ENCODE measurements at regions of chr6 and their contacts with region 1.

Region 1: DNA sequence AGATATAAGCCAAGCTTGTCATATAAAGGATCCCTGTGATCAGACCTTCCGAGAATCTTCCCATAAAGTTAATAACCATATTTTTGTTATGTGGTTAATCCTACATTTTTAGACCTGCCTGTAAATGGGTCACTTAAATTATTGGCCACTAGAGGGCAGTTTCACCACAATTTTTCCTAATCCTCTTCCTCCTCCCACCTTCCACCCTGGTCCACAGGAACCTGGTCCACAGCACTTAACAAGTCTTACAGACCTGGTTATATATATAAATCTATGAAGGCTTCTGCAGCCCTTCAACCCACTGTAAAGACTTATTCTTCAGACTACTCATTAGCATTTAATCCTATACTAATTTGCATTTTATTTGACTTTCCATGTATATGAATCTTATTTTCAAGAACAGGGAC is 28.3 kb downstream of the MRS2 start:
- DNase-seq: peak in 1 of 2 experiments; percentile 9
- H3K4me3 ChIP-seq: no peak overlapping the region
- H3K27ac ChIP-seq: no peak overlapping the region
- H3K4me1 ChIP-seq: no peaks in the 10 kb centered on the region
- H3K27me3 ChIP-seq: no peaks in the 10 kb centered on the region
- CTCF ChIP-seq: peak; percentile 3 to 67 (median 51)
- EP300 ChIP-seq: no peak
- POLR2A ChIP-seq: no peak
- RAD21 ChIP-seq: peak; percentile 69 to 72

Region 2: GRCh38 chr6:24402697-24403501 is 28.1 kb before region 1 on chr6 and contains the start of gene MRS2:
- CTCF ChIA-PET with region 1: interaction called, 3 read pairs
- POLR2A ChIA-PET with region 1: interaction called, 16 read pairs
- DNase-seq: peak; percentile 78 to 90
- H3K4me3 ChIP-seq: peak within 1 kb of the TSS; percentile 73 to 94 (median 86)
- H3K27ac ChIP-seq: peak within 1 kb of the TSS; percentile 80
- H3K4me1 ChIP-seq: peaks cover 5 to 21% (median 12%) of the 10 kb centered on the region in 4 experiments
- H3K27me3 ChIP-seq: no peaks in the 10 kb centered on the region
- CTCF ChIP-seq: no peak
- EP300 ChIP-seq: no peak
- POLR2A ChIP-seq: peak; percentile 66 to 90
- RAD21 ChIP-seq: no peak
- total RNA-seq, gene MRS2: 67.5 and 68.4 TPM in 2 replicates

Region 3: DNA sequence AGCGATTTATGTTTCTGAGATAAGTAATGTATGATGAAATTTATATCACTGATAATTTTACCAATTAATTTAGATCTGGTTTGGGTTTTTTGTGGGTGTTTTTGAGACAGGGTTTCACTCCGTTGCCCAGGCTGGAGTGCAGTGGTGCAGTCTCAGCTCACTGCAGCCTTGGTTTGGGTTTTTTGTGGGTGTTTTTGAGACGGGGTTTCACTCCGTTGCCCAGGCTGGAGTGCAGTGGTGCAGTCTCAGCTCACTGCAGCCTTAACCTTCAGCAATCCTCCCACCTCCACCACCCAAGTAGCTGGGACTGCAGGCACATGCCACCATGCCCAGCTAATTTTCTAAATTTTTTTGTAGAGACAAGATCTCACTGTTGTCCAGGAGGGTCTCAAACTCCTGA is 15.3 kb before region 1 on chr6:
- CTCF ChIA-PET with region 1: interaction called, 14 read pairs
- POLR2A ChIA-PET with region 1: interaction called, 33 read pairs
- DNase-seq: no peak
- H3K4me3 ChIP-seq: no peak overlapping the region
- H3K27ac ChIP-seq: no peak overlapping the region
- H3K4me1 ChIP-seq: no peaks in the 10 kb centered on the region
- H3K27me3 ChIP-seq: no peaks in the 10 kb centered on the region
- CTCF ChIP-seq: no peak
- EP300 ChIP-seq: no peak
- POLR2A ChIP-seq: no peak
- RAD21 ChIP-seq: no peak

Region 4: DNA sequence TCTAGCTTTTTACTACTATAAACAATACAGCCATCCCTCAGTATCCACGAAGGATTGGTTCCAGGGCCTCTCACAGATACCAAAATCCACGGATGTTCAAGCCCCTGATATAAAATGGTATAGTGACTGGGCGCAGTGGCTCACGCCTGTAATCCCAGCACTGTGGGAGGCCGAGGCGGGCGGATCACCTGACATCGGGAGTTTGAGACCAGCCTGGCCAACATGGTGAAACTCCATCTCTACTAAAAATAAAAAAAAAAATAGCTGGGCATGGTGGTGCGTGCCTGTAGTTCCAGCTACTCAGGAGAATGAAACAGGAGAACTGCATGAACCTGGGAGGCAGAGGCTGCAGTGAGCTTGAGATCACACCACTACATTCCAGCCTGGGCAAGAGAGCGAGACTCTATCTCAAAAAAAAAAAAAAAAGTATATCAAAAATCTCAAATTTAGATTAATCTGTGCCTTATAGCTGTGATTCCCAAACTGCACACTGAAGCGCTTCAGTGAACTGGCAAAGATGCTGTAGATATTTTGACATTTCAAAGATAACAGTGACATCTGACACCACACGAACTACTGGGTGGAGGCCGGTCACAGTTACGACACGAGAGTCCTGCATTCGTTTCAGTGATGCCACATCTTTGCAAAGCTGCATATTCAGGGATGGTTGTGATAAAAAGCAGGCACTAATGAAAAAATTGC is 10.0 kb after region 1 on chr6:
- CTCF ChIA-PET with region 1: interaction called, 12 read pairs
- POLR2A ChIA-PET with region 1: interaction called, 3 read pairs
- DNase-seq: no peak
- H3K4me3 ChIP-seq: no peak overlapping the region
- H3K27ac ChIP-seq: no peak overlapping the region
- H3K4me1 ChIP-seq: peaks cover 0 to 4% (median 2%) of the 10 kb centered on the region in 4 experiments; a peak in 2 of 7 replicates
- H3K27me3 ChIP-seq: no peaks in the 10 kb centered on the region
- CTCF ChIP-seq: no peak
- EP300 ChIP-seq: no peak
- POLR2A ChIP-seq: no peak
- RAD21 ChIP-seq: no peak

Region 5: GRCh38 chr6:24494821-24495795 is 64.1 kb after region 1 on chr6 and contains the start of gene ALDH5A1:
- CTCF ChIA-PET with region 1: interaction called, 26 read pairs
- POLR2A ChIA-PET with region 1: interaction called, 5 read pairs
- DNase-seq: peak; percentile 39 to 84
- H3K4me3 ChIP-seq: peak within 1 kb of the TSS; percentile 48 to 72 (median 66)
- H3K27ac ChIP-seq: no peak within 1 kb of the TSS
- H3K4me1 ChIP-seq: peaks cover 0 to 7% (median 3%) of the 10 kb centered on the region in 4 experiments; a peak in 4 of 7 replicates
- H3K27me3 ChIP-seq: peaks cover 0 to 24% (median 8%) of the 10 kb centered on the region in 4 experiments; a peak in 6 of 7 replicates
- CTCF ChIP-seq: peak; percentile 35 to 40 (median 36)
- EP300 ChIP-seq: no peak
- POLR2A ChIP-seq: peak in 1 of 2 experiments; percentile 12; a peak in 1 of 3 replicates
- RAD21 ChIP-seq: peak; percentile 50 to 65
- total RNA-seq, gene ALDH5A1: 2.4 and 4.1 TPM in 2 replicates

Region 6: GRCh38 chr6:24788048-24788665 is 357.1 kb after region 1 on chr6:
- CTCF ChIA-PET with region 1: no interaction called
- POLR2A ChIA-PET with region 1: no interaction called
- DNase-seq: no peak
- H3K4me3 ChIP-seq: no peak overlapping the region
- H3K27ac ChIP-seq: no peak overlapping the region
- H3K4me1 ChIP-seq: no peaks in the 10 kb centered on the region
- H3K27me3 ChIP-seq: no peaks in the 10 kb centered on the region
- CTCF ChIP-seq: no peak
- EP300 ChIP-seq: no peak
- POLR2A ChIP-seq: no peak
- RAD21 ChIP-seq: no peak